Endothelial cell of umbilical vein (primary cell): ENCODE measurements at regions of chr10 and their contacts with region 1.

Region 1: GRCh38 chr10:120394446-120394845 is 62.6 kb upstream of the PLPP4 start:
- DNase-seq: peak; percentile 82
- H3K4me3 ChIP-seq: no peak overlapping the region
- H3K27ac ChIP-seq: peak overlapping the region; percentile 30
- H3K4me1 ChIP-seq: peaks cover 20% of the 10 kb centered on the region
- H3K27me3 ChIP-seq: no peaks in the 10 kb centered on the region
- CTCF ChIP-seq: no peak
- POLR2A ChIP-seq: peak; percentile 22

Region 2: GRCh38 chr10:120262857-120263547 is 131.4 kb before region 1 on chr10:
- CTCF ChIA-PET with region 1: no interaction called
- POLR2A ChIA-PET with region 1: no interaction called
- dilution Hi-C with region 1: no loop called
- intact Hi-C with region 1: no loop called
- DNase-seq: no peak
- H3K4me3 ChIP-seq: no peak overlapping the region
- H3K27ac ChIP-seq: no peak overlapping the region
- H3K4me1 ChIP-seq: no peaks in the 10 kb centered on the region
- H3K27me3 ChIP-seq: no peaks in the 10 kb centered on the region
- CTCF ChIP-seq: no peak
- POLR2A ChIP-seq: no peak

Region 3: GRCh38 chr10:120336911-120337540 is 57.4 kb before region 1 on chr10:
- CTCF ChIA-PET with region 1: interaction called, 9 read pairs
- POLR2A ChIA-PET with region 1: no interaction called
- dilution Hi-C with region 1: no loop called
- intact Hi-C with region 1: loop called (anchors 5 kb)
- DNase-seq: peak; percentile 66
- H3K4me3 ChIP-seq: no peak overlapping the region
- H3K27ac ChIP-seq: no peak overlapping the region
- H3K4me1 ChIP-seq: no peaks in the 10 kb centered on the region
- H3K27me3 ChIP-seq: peaks cover 0 to 2% of the 10 kb centered on the region in 2 experiments
- CTCF ChIP-seq: peak; percentile 82 to 85
- POLR2A ChIP-seq: no peak

Region 4: GRCh38 chr10:120415709-120416330 is 21.4 kb after region 1 on chr10:
- CTCF ChIA-PET with region 1: no interaction called
- POLR2A ChIA-PET with region 1: no interaction called
- dilution Hi-C with region 1: no loop called
- intact Hi-C with region 1: loop called (anchors 2 kb)
- DNase-seq: peak; percentile 40
- H3K4me3 ChIP-seq: no peak overlapping the region
- H3K27ac ChIP-seq: peak overlapping the region; percentile 37
- H3K4me1 ChIP-seq: peaks cover 8% of the 10 kb centered on the region
- H3K27me3 ChIP-seq: no peaks in the 10 kb centered on the region
- CTCF ChIP-seq: no peak
- POLR2A ChIP-seq: no peak